H1 (cell line): ENCODE measurements at regions of chr1 and their contacts with region 1.

Region 1: DNA sequence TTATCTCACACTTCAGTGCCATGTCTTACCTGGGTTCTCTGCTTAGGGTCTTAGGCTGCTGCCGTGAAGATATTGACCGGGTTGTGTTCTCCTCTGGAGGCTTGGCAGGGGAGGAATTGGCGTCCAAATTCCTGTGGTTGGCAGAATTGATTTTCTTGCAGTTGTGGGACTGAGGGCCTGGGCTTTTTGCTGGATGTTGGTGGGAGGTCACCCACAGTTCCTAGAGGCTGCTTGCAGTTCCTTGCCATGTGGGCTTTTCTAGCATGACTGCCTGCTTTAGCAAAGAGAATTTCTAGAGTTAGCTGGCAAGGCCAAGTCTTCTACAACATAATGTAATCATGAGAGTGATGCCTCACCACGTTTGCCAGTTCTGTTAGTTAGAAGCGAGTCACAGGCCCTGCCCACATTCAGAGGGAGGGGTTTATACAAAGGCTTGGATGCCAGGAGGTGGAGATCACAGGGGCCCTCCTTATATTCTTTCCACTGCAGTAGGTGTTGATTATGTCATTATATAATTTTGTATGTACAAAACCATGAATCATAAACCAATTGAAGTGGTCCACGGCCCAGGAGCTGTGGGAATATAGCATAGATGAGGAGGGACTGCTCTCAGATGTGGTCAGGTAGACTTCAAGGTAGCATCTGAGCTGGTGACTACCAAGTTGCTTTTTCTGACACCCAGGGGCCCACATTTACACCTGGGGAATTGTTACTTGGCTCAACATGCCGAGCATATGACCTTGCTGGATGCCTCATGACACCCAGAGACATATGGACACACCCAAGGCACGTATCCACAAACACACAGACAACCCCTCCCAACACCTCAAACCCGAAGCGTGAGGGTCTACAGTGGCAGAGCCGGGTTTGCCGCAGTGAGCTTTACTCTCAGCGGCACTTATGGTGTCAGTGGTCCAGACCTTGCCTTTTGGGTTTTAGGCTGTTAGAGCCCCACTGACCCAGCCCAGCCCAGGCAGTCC is 6.7 kb downstream of the UBL4B start:
- DNase-seq: no peak
- H3K4me3 ChIP-seq: no peak overlapping the region
- H3K27ac ChIP-seq: no peak overlapping the region
- H3K4me1 ChIP-seq: no peaks in the 10 kb centered on the region; a peak in 1 of 7 replicates
- H3K27me3 ChIP-seq: no peaks in the 10 kb centered on the region
- CTCF ChIP-seq: no peak
- EP300 ChIP-seq: no peak
- POLR2A ChIP-seq: no peak
- RAD21 ChIP-seq: no peak

Region 2: DNA sequence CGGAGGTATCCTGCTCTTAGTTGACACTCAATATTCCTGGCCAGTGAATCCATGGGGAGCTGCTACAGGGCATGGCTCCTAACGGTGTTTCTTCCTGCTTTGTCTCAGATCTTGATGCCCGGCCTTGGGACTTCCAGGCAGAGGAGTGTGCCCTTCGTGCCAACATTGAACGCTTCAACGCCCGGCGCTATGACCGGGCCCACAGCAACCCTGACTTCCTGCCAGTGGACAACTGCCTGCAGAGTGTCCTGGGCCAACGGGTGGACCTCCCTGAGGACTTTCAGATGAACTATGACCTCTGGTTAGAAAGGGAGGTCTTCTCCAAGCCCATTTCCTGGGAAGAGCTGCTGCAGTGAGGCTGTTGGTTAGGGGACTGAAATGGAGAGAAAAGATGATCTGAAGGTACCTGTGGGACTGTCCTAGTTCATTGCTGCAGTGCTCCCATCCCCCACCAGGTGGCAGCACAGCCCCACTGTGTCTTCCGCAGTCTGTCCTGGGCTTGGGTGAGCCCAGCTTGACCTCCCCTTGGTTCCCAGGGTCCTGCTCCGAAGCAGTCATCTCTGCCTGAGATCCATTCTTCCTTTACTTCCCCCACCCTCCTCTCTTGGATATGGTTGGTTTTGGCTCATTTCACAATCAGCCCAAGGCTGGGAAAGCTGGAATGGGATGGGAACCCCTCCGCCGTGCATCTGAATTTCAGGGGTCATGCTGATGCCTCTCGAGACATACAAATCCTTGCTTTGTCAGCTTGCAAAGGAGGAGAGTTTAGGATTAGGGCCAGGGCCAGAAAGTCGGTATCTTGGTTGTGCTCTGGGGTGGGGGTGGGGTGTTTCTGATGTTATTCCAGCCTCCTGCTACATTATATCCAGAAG is 65.1 kb before region 1 on chr1:
- CTCF ChIA-PET with region 1: interaction called, 88 read pairs
- POLR2A ChIA-PET with region 1: interaction called, 3 read pairs
- DNase-seq: peak in 1 of 2 experiments; percentile 97
- H3K4me3 ChIP-seq: no peak overlapping the region
- H3K27ac ChIP-seq: no peak overlapping the region
- H3K4me1 ChIP-seq: no peaks in the 10 kb centered on the region
- H3K27me3 ChIP-seq: no peaks in the 10 kb centered on the region
- CTCF ChIP-seq: peak; percentile 87 to 99 (median 99)
- EP300 ChIP-seq: no peak
- POLR2A ChIP-seq: no peak
- RAD21 ChIP-seq: peak; percentile 91 to 96

Region 3: GRCh38 chr1:110060034-110060661 is 58.8 kb before region 1 on chr1:
- CTCF ChIA-PET with region 1: interaction called, 88 read pairs
- POLR2A ChIA-PET with region 1: interaction called, 3 read pairs
- DNase-seq: peak in 1 of 2 experiments; percentile 94
- H3K4me3 ChIP-seq: no peak overlapping the region
- H3K27ac ChIP-seq: no peak overlapping the region
- H3K4me1 ChIP-seq: no peaks in the 10 kb centered on the region
- H3K27me3 ChIP-seq: peaks cover 0 to 8% (median 4%) of the 10 kb centered on the region in 4 experiments; a peak in 5 of 7 replicates
- CTCF ChIP-seq: peak; percentile 67 to 97 (median 97)
- EP300 ChIP-seq: no peak
- POLR2A ChIP-seq: no peak
- RAD21 ChIP-seq: peak in 1 of 2 experiments; percentile 38; a peak in 1 of 4 replicates

Region 4: DNA sequence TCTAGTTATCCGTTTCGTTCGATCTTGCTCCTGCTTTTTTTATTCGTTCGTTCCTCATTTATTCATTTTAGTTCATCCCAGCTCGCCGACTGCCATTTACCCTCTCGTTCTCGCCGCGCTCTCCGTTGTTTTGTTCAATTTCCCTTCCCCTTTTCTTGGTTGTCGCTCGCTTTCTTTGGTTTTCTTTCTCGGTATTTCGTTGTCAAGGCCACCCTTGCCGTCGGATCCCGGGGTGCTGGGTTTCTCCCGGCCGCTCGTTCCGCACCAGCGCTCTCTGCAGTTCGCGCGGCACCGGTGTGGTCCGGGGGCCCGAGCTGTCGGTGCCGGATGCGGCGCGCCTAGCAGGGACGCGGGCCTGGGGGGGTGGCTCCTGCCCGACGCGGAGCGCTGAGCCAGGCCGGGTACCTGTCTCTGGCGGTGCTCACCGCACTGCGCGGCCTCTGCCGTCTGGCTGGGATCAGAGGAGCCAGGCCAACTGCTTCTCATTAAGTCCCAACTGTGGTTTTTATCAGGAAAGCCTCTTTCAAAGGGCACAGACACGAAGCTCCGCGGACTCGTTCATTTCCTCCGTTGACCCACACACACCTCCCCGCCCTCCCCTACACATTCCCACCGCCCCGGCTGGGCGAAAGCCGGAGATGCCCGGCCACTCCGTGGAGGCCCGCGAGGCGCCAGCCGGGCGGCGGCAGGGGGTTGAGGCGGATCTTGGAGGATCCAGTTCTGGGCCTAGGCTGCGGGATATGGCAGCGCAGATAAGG is 50.1 kb before region 1 on chr1:
- CTCF ChIA-PET with region 1: interaction called, 24 read pairs
- POLR2A ChIA-PET with region 1: no interaction called
- DNase-seq: peak in 1 of 2 experiments; percentile 66
- H3K4me3 ChIP-seq: peak overlapping the region in 2 of 4 experiments; percentile 43 to 56; a peak in 5 of 8 replicates
- H3K27ac ChIP-seq: no peak overlapping the region
- H3K4me1 ChIP-seq: peaks cover 3 to 31% (median 15%) of the 10 kb centered on the region in 4 experiments; a peak in 6 of 7 replicates
- H3K27me3 ChIP-seq: peaks cover 62 to 93% (median 83%) of the 10 kb centered on the region in 4 experiments
- CTCF ChIP-seq: no peak
- EP300 ChIP-seq: no peak
- POLR2A ChIP-seq: no peak
- RAD21 ChIP-seq: no peak

Region 5: DNA sequence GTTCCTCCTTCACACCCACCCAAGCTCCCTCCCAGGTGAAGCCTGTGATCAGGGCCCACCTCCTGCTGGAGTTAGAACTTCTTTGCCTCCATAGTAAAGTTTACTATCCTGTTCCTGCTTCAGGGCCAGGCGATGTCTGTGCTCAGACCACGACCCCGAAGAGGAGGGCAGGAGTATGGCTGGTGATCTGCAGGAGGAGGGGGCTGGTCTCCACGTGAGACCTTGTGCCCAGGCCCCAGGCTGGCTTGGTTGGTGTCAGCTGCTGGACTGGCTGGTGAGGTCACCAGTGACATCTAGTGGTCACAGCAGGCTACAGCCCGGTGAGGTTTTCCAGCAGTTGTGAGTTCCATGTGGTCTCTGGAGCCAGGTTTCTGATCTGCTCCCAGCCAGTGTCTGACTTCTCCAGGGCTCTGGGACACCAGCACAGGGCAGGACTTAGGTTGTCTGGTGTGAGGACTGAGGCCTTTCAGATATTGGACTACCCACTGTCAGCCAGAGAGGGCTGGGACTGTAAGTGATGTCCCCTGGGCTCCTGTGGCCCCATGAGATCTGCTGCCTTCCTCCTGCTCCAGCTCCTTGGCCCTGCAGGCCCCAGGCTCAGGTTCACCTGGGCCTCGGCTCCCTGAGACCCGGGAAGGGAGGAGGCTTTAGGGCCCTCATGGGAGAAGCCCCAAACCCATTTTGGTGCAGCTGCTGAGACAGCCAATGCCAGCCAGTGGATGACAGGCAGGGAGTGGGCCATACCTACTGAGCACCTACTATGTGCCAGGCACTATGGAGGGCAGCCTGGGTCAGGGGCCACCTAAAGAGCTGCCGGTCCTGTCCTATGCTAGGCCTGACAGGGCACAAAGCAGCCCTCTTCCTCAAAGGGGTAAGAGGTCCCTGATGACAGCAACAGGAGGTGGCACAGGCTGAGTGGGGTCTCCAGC is 12.6 kb before region 1 on chr1:
- CTCF ChIA-PET with region 1: interaction called, 126 read pairs
- POLR2A ChIA-PET with region 1: interaction called, 3 read pairs
- DNase-seq: peak; percentile 51 to 84
- H3K4me3 ChIP-seq: no peak overlapping the region
- H3K27ac ChIP-seq: no peak overlapping the region
- H3K4me1 ChIP-seq: no peaks in the 10 kb centered on the region
- H3K27me3 ChIP-seq: no peaks in the 10 kb centered on the region; a peak in 2 of 7 replicates
- CTCF ChIP-seq: peak; percentile 91 to 99 (median 97)
- EP300 ChIP-seq: no peak
- POLR2A ChIP-seq: no peak
- RAD21 ChIP-seq: peak; percentile 89 to 91

Region 6: GRCh38 chr1:110135268-110136065 is 16.5 kb after region 1 on chr1:
- CTCF ChIA-PET with region 1: interaction called, 12 read pairs
- POLR2A ChIA-PET with region 1: no interaction called
- DNase-seq: no peak
- H3K4me3 ChIP-seq: no peak overlapping the region
- H3K27ac ChIP-seq: no peak overlapping the region
- H3K4me1 ChIP-seq: peaks cover 7 to 25% (median 17%) of the 10 kb centered on the region in 4 experiments
- H3K27me3 ChIP-seq: peaks cover 0 to 2% (median 0%) of the 10 kb centered on the region in 4 experiments; a peak in 3 of 7 replicates
- CTCF ChIP-seq: no peak
- EP300 ChIP-seq: no peak
- POLR2A ChIP-seq: no peak
- RAD21 ChIP-seq: no peak

Region 7: GRCh38 chr1:110170766-110171733 is 52.1 kb after region 1 on chr1:
- CTCF ChIA-PET with region 1: interaction called, 14 read pairs
- POLR2A ChIA-PET with region 1: no interaction called
- DNase-seq: no peak
- H3K4me3 ChIP-seq: no peak overlapping the region
- H3K27ac ChIP-seq: no peak overlapping the region
- H3K4me1 ChIP-seq: peaks cover 0 to 4% (median 0%) of the 10 kb centered on the region in 4 experiments; a peak in 2 of 7 replicates
- H3K27me3 ChIP-seq: no peaks in the 10 kb centered on the region; a peak in 1 of 7 replicates
- CTCF ChIP-seq: no peak
- EP300 ChIP-seq: no peak
- POLR2A ChIP-seq: no peak
- RAD21 ChIP-seq: no peak